ENCODE measurements at regions of chr11 and their contacts with region 1.

Region 1: GRCh38 chr11:76444384-76445123 is at the start of gene EMSY:
- DNase-seq: peak; percentile 95
- H3K4me3 Mint-ChIP-seq: peak within 1 kb of the TSS; percentile 95
- H3K27ac Mint-ChIP-seq: peak within 1 kb of the TSS; percentile 96
- H3K4me1 Mint-ChIP-seq: peaks cover 32% of the 10 kb centered on the region
- H3K27me3 Mint-ChIP-seq: no peaks in the 10 kb centered on the region
- total RNA-seq, gene EMSY: 23.2 to 26.7 TPM

Region 2: DNA sequence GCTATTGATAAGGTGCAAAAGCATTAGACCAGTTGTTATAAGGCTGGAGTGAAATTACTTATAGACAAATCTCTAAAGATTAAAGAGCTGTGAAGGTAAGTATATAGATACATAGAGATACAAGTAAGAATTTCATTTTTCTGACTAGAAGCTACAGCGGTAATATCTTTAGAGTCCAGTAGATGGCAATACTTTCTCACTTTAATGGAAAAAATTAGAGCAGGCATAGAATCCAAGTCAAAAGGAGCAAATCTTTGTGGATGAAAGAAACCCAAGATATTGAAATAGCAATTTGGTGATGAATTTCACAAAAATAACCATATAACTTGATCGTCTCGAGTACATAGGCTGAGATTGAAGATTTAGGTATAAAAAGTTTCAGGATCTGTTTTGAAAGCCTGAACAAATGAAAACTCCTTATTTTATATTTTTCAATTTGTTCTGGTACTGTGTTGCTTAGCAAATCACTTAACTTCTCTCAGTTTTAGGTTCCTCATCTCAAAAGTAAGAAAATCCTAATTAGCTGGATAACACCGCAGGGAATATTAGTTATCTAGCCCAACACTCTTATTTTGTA is 547.6 kb before region 1 on chr11:
- CTCF ChIA-PET with region 1: no interaction called
- intact Hi-C with region 1: loop called (anchors 10 kb)
- DNase-seq: no peak
- H3K4me3 Mint-ChIP-seq: no peak overlapping the region
- H3K27ac Mint-ChIP-seq: no peak overlapping the region
- H3K4me1 Mint-ChIP-seq: peaks cover 23% of the 10 kb centered on the region
- H3K27me3 Mint-ChIP-seq: no peaks in the 10 kb centered on the region

Region 3: DNA sequence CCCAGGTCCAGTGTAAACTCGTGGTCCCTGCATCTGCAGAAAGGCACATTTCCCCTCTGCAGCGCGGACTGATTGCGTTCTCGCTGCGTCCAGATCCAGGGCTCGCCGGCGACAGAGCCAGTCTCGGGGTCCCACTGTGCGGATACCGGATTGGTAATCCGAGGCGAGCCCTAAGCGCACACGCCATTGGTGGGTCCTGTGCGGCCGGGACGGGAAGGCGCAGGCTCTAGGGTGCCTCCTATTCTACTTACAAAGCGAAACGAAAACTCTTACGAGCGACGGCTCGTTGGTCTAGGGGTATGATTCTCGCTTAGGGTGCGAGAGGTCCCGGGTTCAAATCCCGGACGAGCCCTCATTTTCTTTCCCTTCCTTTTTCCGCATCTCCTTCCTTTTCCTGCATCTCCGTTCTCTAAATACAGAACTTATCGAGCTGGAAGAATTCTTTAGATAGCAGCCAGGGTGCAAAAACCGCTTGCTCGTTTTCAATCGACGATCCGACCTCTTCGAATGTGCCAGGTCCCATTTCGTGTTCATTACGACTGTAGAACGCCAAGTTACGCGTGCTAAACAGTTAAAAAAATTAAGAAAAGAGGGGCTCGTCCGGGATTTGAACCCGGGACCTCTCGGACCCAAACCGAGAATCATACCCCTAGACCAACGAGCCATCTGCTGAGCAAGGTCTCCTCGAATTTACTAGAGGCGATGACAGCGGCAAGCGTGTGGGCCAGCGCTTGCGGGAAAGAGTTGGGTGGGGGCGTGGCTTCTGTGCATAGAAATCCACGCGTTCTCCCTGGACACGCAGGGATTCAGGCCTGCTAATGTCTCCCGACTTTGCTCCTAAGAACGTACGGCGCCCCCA is 209.1 kb before region 1 on chr11:
- CTCF ChIA-PET with region 1: no interaction called
- intact Hi-C with region 1: loop called (anchors 1 kb)
- DNase-seq: peak; percentile 96
- H3K4me3 Mint-ChIP-seq: peak overlapping the region; percentile 84
- H3K27ac Mint-ChIP-seq: peak overlapping the region; percentile 93
- H3K4me1 Mint-ChIP-seq: peaks cover 44% of the 10 kb centered on the region
- H3K27me3 Mint-ChIP-seq: peaks cover 3% of the 10 kb centered on the region

Region 4: GRCh38 chr11:76371170-76371569 is 73.4 kb before region 1 on chr11:
- CTCF ChIA-PET with region 1: interaction called, 4 read pairs
- intact Hi-C with region 1: loop called (anchors 1 kb)
- DNase-seq: peak; percentile 72
- H3K4me3 Mint-ChIP-seq: no peak overlapping the region
- H3K27ac Mint-ChIP-seq: peak overlapping the region; percentile 62
- H3K4me1 Mint-ChIP-seq: peaks cover 55% of the 10 kb centered on the region
- H3K27me3 Mint-ChIP-seq: no peaks in the 10 kb centered on the region

Region 5: GRCh38 chr11:76380967-76381719 is 63.4 kb before region 1 on chr11 and contains the starts of genes GVQW3 and THAP12:
- CTCF ChIA-PET with region 1: interaction called, 6 read pairs
- intact Hi-C with region 1: loop called (anchors 1 kb)
- DNase-seq: peak; percentile 97
- H3K4me3 Mint-ChIP-seq: peak within 1 kb of the TSS; percentile 91
- H3K27ac Mint-ChIP-seq: peak within 1 kb of the TSS; percentile 91
- H3K4me1 Mint-ChIP-seq: peaks cover 58% of the 10 kb centered on the region
- H3K27me3 Mint-ChIP-seq: no peaks in the 10 kb centered on the region
- total RNA-seq, gene GVQW3: 1.7 to 2.1 TPM
- total RNA-seq, gene THAP12: 39.4 to 40.6 TPM

Region 6: DNA sequence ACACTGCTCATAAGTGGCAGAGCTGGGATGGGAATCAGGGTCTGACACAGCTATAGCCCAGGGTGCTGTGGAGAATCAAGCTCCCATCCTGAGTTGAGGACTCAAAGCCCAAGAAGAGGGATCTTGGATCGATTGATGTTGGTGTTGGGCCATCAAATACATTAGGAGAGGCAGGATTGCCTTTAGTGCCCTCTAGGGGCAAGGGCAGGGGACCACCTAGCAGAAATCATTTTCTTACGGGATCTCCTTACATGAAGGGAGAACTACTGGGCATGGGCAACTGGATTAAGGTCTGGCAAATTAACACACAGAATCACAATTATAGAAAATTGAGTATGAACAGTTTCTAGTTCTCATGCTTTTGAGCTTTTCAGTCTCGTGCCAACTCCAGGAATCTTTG is 24.7 kb before region 1 on chr11:
- CTCF ChIA-PET with region 1: no interaction called
- intact Hi-C with region 1: loop called (anchors 2 kb)
- DNase-seq: peak; percentile 32
- H3K4me3 Mint-ChIP-seq: no peak overlapping the region
- H3K27ac Mint-ChIP-seq: no peak overlapping the region
- H3K4me1 Mint-ChIP-seq: peaks cover 7% of the 10 kb centered on the region
- H3K27me3 Mint-ChIP-seq: peaks cover 5% of the 10 kb centered on the region

Region 7: DNA sequence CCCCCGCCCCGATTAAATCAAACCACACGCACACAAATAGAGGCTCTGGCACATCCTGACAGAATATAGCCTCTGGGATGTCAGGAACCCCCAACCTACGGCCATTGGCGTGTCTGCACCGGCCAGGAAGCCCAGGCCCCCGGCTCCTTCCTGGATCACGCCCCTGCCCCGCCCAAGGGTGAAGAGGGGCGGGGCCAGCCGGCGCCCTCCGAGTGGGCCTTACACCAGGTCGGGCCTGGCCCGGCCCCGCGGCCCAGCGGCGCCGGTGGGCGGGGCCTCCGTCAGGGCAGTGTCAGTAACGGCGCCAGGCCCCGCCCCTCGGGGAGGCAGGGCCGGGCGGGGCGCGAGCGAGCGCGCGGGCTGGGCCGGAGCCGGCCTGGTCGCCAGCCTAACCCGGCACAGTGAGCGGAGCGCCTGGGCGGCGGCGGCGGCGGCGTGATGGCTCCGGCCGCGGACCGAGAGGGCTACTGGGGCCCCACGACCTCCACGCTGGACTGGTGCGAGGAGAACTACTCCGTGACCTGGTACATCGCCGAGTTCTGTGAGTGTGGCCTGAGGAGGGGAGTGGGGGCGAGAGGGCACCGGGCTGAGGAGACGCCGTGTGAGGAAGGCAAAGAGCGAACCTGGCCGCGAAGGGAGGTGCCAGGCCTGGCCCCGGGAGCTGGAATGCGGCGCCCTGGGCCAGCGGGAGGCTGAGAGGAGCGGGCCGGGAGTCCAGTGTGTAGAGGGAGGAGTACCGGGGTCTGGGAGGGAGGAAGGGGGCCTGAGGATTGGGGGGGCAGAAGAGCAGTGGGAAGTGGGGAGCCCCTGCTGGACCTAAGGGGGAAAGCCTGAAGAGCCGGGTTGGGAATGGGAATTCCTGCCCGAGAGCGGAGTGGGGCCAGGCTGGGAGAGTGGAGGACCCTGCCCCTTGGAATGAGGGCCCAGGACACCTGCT is 416.3 kb after region 1 on chr11 and contains the start of gene ACER3:
- CTCF ChIA-PET with region 1: no interaction called
- intact Hi-C with region 1: loop called (anchors 1 kb)
- DNase-seq: peak; percentile 85
- H3K4me3 Mint-ChIP-seq: peak within 1 kb of the TSS; percentile 87
- H3K27ac Mint-ChIP-seq: no peak within 1 kb of the TSS
- H3K4me1 Mint-ChIP-seq: peaks cover 14% of the 10 kb centered on the region
- H3K27me3 Mint-ChIP-seq: no peaks in the 10 kb centered on the region
- total RNA-seq, gene ACER3: 7.6 to 10.0 TPM

Measured in activated naive CD4-positive, alpha-beta T cell treated with anti-CD3 and anti-CD28 coated beads for 36 hours (primary cell).